Esophagus muscularis mucosa (tissue), 4 donors: ENCODE measurements at regions of chr2 and their contacts with region 1.

Region 1: GRCh38 chr2:55718165-55719008 is 24.7 kb upstream of the PNPT1 start:
- DNase-seq: no peak
- H3K4me3 ChIP-seq: no peak overlapping the region
- H3K27ac ChIP-seq: no peak overlapping the region
- H3K4me1 ChIP-seq: no peaks in the 10 kb centered on the region
- H3K27me3 ChIP-seq: no peaks in the 10 kb centered on the region
- CTCF ChIP-seq: peak; percentile 62 to 80 (median 72)
- EP300 ChIP-seq: no peak
- POLR2A ChIP-seq: no peak

Region 2: DNA sequence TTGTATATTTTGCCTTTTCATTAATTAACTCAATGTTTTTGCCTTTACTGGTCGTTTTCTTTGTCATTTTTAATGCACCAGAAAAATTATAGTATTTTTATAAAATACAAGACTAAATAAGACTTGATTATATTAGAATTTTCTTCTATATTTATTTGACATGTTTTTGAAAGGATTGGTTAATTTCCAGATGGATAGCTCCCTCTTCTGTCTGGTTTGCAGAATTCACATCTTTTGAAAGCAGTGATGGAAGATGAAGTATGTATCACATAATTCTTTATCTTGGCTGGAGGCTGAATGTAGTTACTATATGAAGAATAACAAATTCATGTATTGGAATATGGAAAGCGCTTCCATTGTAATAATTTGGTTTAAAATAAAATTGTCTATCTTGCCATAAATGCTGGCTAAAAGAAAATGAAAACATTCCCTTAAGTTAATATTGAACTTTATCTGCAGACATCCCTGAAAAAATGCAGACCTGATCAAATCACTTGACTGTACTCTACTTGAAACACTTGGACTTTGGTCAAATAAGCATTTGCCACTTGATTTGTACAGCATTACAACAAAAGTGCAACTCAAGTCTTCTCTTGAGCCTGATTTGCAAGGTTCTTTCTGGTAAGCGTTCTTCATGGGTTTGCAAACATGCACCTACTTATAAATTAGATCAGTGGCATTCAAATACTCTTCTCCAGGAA is 291.5 kb after region 1 on chr2:
- intact Hi-C with region 1: loop called (anchors 5 kb)
- DNase-seq: no peak
- H3K4me3 ChIP-seq: no peak overlapping the region
- H3K27ac ChIP-seq: no peak overlapping the region
- H3K4me1 ChIP-seq: peaks cover 0 to 10% (median 3%) of the 10 kb centered on the region in 4 donors
- H3K27me3 ChIP-seq: no peaks in the 10 kb centered on the region
- CTCF ChIP-seq: peak; percentile 28 to 38 (median 36)
- EP300 ChIP-seq: no peak
- POLR2A ChIP-seq: no peak

Region 3: GRCh38 chr2:56132138-56132537 is 413.8 kb after region 1 on chr2:
- intact Hi-C with region 1: loop called (anchors 5 kb)
- DNase-seq: no peak
- H3K4me3 ChIP-seq: no peak overlapping the region
- H3K27ac ChIP-seq: no peak overlapping the region
- H3K4me1 ChIP-seq: no peaks in the 10 kb centered on the region
- H3K27me3 ChIP-seq: no peaks in the 10 kb centered on the region
- CTCF ChIP-seq: peak; percentile 21 to 44 (median 30)
- EP300 ChIP-seq: no peak
- POLR2A ChIP-seq: no peak

Region 4: DNA sequence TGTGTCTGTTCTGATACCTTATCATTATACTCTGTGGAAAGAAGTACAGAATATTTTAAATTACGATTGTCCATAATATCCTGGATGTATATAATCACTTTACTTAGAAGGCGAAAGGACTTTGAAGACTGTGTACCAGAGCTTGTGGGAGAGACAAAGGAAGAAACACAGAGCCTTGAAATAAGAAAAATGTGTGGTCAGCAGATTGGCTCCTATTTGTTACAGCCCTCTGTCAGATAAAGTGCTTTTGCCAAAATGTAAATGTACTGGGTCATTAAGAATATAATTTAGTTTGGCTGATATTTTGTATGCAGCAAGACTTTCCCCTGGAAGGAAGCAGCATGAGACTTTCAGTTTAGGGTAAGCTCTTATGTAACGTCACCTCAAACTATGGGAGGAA is 908.5 kb after region 1 on chr2:
- intact Hi-C with region 1: no loop called
- DNase-seq: no peak
- H3K4me3 ChIP-seq: no peak overlapping the region
- H3K27ac ChIP-seq: no peak overlapping the region
- H3K4me1 ChIP-seq: no peaks in the 10 kb centered on the region
- H3K27me3 ChIP-seq: no peaks in the 10 kb centered on the region
- CTCF ChIP-seq: no peak
- EP300 ChIP-seq: no peak
- POLR2A ChIP-seq: no peak